ENCODE measurements at regions of chr3 and their contacts with region 1.

Region 1: GRCh38 chr3:12706504-12707253 is 42.8 kb upstream of the RAF1 start:
- DNase-seq: peak; percentile 91
- H3K4me3 Mint-ChIP-seq: no peak overlapping the region
- H3K27ac Mint-ChIP-seq: no peak overlapping the region
- H3K4me1 Mint-ChIP-seq: peaks cover 42% of the 10 kb centered on the region
- H3K27me3 Mint-ChIP-seq: no peaks in the 10 kb centered on the region
- CTCF ChIP-seq: peak; percentile 59

Region 2: GRCh38 chr3:12601072-12601471 is 105.6 kb before region 1 on chr3:
- CTCF ChIA-PET with region 1: interaction called, 5 read pairs
- POLR2A ChIA-PET with region 1: interaction called, 3 read pairs
- intact Hi-C with region 1: loop called (anchors 5 kb)
- DNase-seq: no peak
- H3K4me3 Mint-ChIP-seq: no peak overlapping the region
- H3K27ac Mint-ChIP-seq: no peak overlapping the region
- H3K4me1 Mint-ChIP-seq: no peaks in the 10 kb centered on the region
- H3K27me3 Mint-ChIP-seq: no peaks in the 10 kb centered on the region
- CTCF ChIP-seq: no peak

Region 3: GRCh38 chr3:12719984-12720898 is 13.6 kb after region 1 on chr3:
- CTCF ChIA-PET with region 1: interaction called, 61 read pairs
- POLR2A ChIA-PET with region 1: interaction called, 3 read pairs
- intact Hi-C with region 1: no loop called
- DNase-seq: peak; percentile 84
- H3K4me3 Mint-ChIP-seq: no peak overlapping the region
- H3K27ac Mint-ChIP-seq: peak overlapping the region; percentile 63
- H3K4me1 Mint-ChIP-seq: peaks cover 15% of the 10 kb centered on the region
- H3K27me3 Mint-ChIP-seq: no peaks in the 10 kb centered on the region
- CTCF ChIP-seq: peak; percentile 84

Region 4: GRCh38 chr3:12741209-12741608 is 34.5 kb after region 1 on chr3:
- CTCF ChIA-PET with region 1: no interaction called
- POLR2A ChIA-PET with region 1: no interaction called
- intact Hi-C with region 1: no loop called
- DNase-seq: no peak
- H3K4me3 Mint-ChIP-seq: no peak overlapping the region
- H3K27ac Mint-ChIP-seq: no peak overlapping the region
- H3K4me1 Mint-ChIP-seq: no peaks in the 10 kb centered on the region
- H3K27me3 Mint-ChIP-seq: no peaks in the 10 kb centered on the region
- CTCF ChIP-seq: no peak

Region 5: GRCh38 chr3:12810013-12810780 is 103.5 kb after region 1 on chr3:
- CTCF ChIA-PET with region 1: interaction called, 22 read pairs
- POLR2A ChIA-PET with region 1: no interaction called
- intact Hi-C with region 1: no loop called
- DNase-seq: peak; percentile 84
- H3K4me3 Mint-ChIP-seq: peak overlapping the region; percentile 22
- H3K27ac Mint-ChIP-seq: no peak overlapping the region
- H3K4me1 Mint-ChIP-seq: no peaks in the 10 kb centered on the region
- H3K27me3 Mint-ChIP-seq: no peaks in the 10 kb centered on the region
- CTCF ChIP-seq: peak; percentile 65

Region 6: GRCh38 chr3:12891985-12892839 is 185.5 kb after region 1 on chr3:
- CTCF ChIA-PET with region 1: interaction called, 11 read pairs
- POLR2A ChIA-PET with region 1: no interaction called
- intact Hi-C with region 1: loop called (anchors 5 kb)
- DNase-seq: peak; percentile 65
- H3K4me3 Mint-ChIP-seq: no peak overlapping the region
- H3K27ac Mint-ChIP-seq: no peak overlapping the region
- H3K4me1 Mint-ChIP-seq: peaks cover 11% of the 10 kb centered on the region
- H3K27me3 Mint-ChIP-seq: peaks cover 31% of the 10 kb centered on the region
- CTCF ChIP-seq: peak; percentile 84

Region 7: DNA sequence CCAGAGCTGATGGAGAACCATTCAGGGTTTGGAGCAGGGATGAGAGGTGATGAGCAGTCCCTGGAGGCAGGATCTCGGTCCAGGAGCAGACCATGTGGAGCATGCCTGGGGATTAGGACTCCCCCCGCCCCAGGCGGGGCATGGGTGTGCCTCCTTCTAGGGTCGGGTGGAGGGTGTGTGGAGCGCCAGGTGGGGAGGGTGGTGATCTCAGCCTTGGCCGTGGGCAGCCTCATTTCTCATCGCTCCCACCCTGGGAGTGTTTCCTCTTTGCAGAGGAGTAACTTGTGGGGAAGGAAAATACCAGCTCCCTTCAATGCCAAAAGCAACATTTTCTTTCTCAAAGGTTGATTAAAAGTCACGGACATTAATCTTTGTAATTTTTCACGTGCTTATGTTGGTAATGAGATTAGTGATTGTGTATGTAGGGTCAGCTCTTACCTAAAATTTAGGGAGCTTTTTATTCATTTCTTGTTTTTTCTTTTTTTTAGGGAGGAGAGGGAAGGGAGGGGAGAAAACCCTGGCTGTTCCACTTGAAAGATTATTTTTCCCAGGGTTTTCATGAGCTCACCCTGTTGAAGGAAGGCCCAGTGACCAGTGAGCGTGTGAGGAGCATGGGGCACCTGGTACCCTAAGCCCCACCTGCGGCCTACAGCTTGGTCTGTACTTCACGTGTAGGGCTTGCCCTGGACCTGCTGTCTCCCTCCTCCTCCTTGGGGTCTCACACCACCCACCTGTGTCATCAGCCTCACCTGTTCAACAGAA is 853.3 kb after region 1 on chr3:
- CTCF ChIA-PET with region 1: no interaction called
- POLR2A ChIA-PET with region 1: no interaction called
- intact Hi-C with region 1: no loop called
- DNase-seq: no peak
- H3K4me3 Mint-ChIP-seq: no peak overlapping the region
- H3K27ac Mint-ChIP-seq: no peak overlapping the region
- H3K4me1 Mint-ChIP-seq: peaks cover 16% of the 10 kb centered on the region
- H3K27me3 Mint-ChIP-seq: no peaks in the 10 kb centered on the region
- CTCF ChIP-seq: no peak